ENCODE measurements at regions of chr1 and their contacts with region 1.

Region 1: GRCh38 chr1:163321311-163322305 is at the start of gene NUF2:
- DNase-seq: peak; percentile 98
- H3K4me3 ChIP-seq: peak within 1 kb of the TSS; percentile 93
- H3K27ac ChIP-seq: peak within 1 kb of the TSS; percentile 77
- H3K27me3 ChIP-seq: no peaks in the 10 kb centered on the region
- CTCF ChIP-seq: no peak

Region 2: DNA sequence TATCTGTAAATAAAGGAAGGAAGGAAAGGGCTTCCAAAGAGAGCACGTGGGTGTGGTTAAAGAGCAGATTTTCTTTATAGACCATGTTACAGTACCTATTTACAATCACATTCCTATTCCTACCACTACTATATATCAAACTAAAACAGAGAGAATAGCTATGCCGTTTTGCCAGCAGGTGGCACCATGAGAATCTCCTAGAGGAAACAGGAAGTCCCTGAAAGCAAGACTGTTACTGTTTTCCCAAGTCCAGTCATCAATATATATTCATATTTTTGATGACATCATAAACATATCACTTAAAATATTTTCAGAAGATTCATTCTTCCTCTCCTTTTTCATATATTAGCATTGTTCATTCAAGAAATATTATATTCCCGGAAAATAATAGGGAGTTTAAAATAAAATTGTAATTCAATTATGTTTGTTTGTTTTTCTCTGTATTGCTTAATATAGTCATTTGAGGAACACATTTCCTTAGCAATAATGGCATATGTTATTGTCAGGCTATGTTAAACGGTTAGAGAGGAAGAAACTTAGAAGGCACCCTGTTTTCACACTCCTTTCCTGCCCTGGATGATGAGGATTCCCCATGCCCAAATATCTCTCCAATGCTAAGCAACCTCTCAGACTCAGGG is 467.2 kb before region 1 on chr1:
- in situ Hi-C with region 1: loop called (anchors 25 kb)
- DNase-seq: peak; percentile 90
- H3K4me3 ChIP-seq: no peak overlapping the region
- H3K27ac ChIP-seq: peak overlapping the region; percentile 99
- H3K27me3 ChIP-seq: no peaks in the 10 kb centered on the region
- CTCF ChIP-seq: peak; percentile 86

Region 3: GRCh38 chr1:163071405-163072255 is 250.0 kb before region 1 on chr1:
- in situ Hi-C with region 1: loop called (anchors 25 kb)
- DNase-seq: peak; percentile 88
- H3K4me3 ChIP-seq: peak overlapping the region; percentile 62
- H3K27ac ChIP-seq: peak overlapping the region; percentile 79
- H3K27me3 ChIP-seq: no peaks in the 10 kb centered on the region
- CTCF ChIP-seq: peak; percentile 87

Region 4: DNA sequence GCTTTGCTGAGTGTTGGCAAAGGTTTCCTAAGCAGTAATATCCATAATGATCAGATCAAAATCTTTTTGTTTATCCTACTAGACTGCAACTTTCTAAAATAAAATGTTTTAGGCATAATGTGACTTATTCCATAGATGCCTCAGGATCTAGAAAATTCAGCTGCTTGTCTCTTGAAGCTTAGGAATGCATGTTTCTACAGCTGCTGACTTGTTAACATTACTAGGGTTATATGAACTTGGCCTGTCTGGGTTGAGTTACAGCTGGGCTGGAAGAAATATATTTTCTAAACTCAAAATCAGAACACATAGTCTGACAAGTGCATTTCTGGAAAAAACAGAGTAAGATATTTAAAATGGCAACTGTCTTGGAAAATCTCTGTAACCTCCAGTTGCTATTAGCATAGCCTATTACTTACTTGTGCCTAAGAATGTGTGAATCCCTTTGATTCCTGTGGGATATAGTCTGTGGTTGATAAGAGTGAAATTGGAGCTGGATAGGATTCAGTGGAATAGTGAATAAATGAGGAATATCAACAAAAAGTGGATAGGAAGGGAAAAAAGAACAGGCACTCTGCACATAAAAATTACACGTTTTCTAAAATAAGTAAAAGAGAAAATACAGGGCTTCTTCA is 191.3 kb before region 1 on chr1:
- in situ Hi-C with region 1: no loop called
- DNase-seq: no peak
- H3K4me3 ChIP-seq: no peak overlapping the region
- H3K27ac ChIP-seq: no peak overlapping the region
- H3K27me3 ChIP-seq: no peaks in the 10 kb centered on the region
- CTCF ChIP-seq: no peak

Region 5: GRCh38 chr1:163240705-163241104 is 80.9 kb before region 1 on chr1:
- in situ Hi-C with region 1: no loop called
- DNase-seq: no peak
- H3K4me3 ChIP-seq: no peak overlapping the region
- H3K27ac ChIP-seq: no peak overlapping the region
- H3K27me3 ChIP-seq: no peaks in the 10 kb centered on the region
- CTCF ChIP-seq: no peak

Region 6: DNA sequence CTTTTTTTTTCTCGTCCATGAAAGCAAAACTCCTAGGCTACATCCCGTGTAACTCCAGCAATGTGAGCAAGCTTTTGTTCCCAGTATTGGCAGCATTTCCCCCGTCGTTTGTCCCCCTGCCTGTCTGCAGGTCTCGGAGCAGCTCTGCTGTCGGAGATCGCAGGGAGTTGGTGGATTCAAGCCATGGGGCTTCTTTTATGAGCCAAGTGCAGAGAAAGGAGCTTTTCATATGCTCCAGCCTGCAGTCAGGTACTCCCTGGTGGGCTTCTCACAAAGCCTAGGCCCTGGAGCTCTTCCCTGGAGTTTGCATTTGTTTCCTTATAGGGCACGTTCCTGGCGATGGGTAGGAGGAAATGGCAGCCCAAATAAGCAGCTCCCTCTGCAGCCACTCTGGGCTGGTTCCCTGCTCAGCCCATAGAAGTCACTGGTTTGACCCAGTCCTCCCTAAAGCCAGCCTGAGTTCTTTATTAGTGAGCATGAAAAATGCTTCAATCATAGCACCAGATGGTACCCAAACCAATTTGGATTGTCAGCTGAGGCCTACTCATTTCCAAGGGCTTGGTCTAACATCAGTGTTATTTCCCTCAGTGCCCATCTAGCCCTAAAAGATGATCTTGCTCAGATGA is 78.5 kb after region 1 on chr1:
- in situ Hi-C with region 1: no loop called
- DNase-seq: no peak
- H3K4me3 ChIP-seq: no peak overlapping the region
- H3K27ac ChIP-seq: no peak overlapping the region
- H3K27me3 ChIP-seq: no peaks in the 10 kb centered on the region
- CTCF ChIP-seq: no peak